ENCODE measurements at regions of chr10 and their contacts with region 1.

Region 1: GRCh38 chr10:48363617-48364355 is 57.3 kb downstream of the MAPK8 start:
- DNase-seq: peak; percentile 60
- H3K4me3 ChIP-seq: no peak overlapping the region
- H3K27ac ChIP-seq: peak overlapping the region; percentile 36
- H3K4me1 ChIP-seq: peaks cover 21% of the 10 kb centered on the region
- H3K27me3 ChIP-seq: no peaks in the 10 kb centered on the region
- CTCF ChIP-seq: peak; percentile 64 to 77

Region 2: DNA sequence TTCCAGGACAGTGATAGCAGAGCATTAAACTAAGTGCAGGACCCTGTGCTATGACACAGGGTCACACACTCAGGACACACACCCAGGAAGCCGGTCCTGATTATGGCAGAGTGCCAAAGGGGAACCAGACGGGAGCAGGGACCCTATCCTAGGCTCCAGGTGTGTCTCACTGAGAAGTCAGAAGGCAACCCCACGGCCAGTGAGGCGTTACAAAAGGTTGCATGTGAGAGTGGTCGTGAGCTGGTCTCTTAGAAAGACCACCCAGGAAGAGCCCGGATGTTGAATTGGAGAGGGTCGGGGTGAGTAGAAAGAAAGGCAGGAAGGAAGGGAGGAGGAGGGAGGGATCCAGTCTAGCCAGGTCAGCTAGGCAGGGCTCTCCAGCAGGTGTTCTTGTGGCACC is 120.3 kb before region 1 on chr10:
- CTCF ChIA-PET with region 1: no interaction called
- dilution Hi-C with region 1: no loop called
- in situ Hi-C with region 1: no loop called
- intact Hi-C with region 1: no loop called
- DNase-seq: no peak
- H3K4me3 ChIP-seq: no peak overlapping the region
- H3K27ac ChIP-seq: no peak overlapping the region
- H3K4me1 ChIP-seq: no peaks in the 10 kb centered on the region
- H3K27me3 ChIP-seq: no peaks in the 10 kb centered on the region
- CTCF ChIP-seq: no peak

Region 3: GRCh38 chr10:48414778-48415177 is 51.0 kb after region 1 on chr10:
- CTCF ChIA-PET with region 1: no interaction called
- dilution Hi-C with region 1: no loop called
- in situ Hi-C with region 1: no loop called
- intact Hi-C with region 1: loop called (anchors 2 kb)
- DNase-seq: peak; percentile 77
- H3K4me3 ChIP-seq: no peak overlapping the region
- H3K27ac ChIP-seq: peak overlapping the region; percentile 6
- H3K4me1 ChIP-seq: peaks cover 40% of the 10 kb centered on the region
- H3K27me3 ChIP-seq: no peaks in the 10 kb centered on the region
- CTCF ChIP-seq: no peak

Region 4: GRCh38 chr10:48444266-48444665 is 80.5 kb after region 1 on chr10:
- CTCF ChIA-PET with region 1: interaction called, 5 read pairs
- dilution Hi-C with region 1: no loop called
- in situ Hi-C with region 1: no loop called
- intact Hi-C with region 1: loop called (anchors 1 kb)
- DNase-seq: peak; percentile 33
- H3K4me3 ChIP-seq: no peak overlapping the region
- H3K27ac ChIP-seq: no peak overlapping the region
- H3K4me1 ChIP-seq: peaks cover under 1% of the 10 kb centered on the region
- H3K27me3 ChIP-seq: no peaks in the 10 kb centered on the region
- CTCF ChIP-seq: peak in 1 of 2 donors; percentile 64

Region 5: GRCh38 chr10:48506147-48506917 is 142.5 kb after region 1 on chr10:
- CTCF ChIA-PET with region 1: no interaction called
- dilution Hi-C with region 1: no loop called
- in situ Hi-C with region 1: loop called in 1 of 2 experiments (anchors 10 kb)
- intact Hi-C with region 1: loop called (anchors 1 kb)
- DNase-seq: no peak
- H3K4me3 ChIP-seq: no peak overlapping the region
- H3K27ac ChIP-seq: no peak overlapping the region
- H3K4me1 ChIP-seq: peaks cover 10% of the 10 kb centered on the region
- H3K27me3 ChIP-seq: no peaks in the 10 kb centered on the region
- CTCF ChIP-seq: peak in 1 of 2 donors; percentile 42

Region 6: GRCh38 chr10:48608279-48608681 is 244.5 kb after region 1 on chr10:
- CTCF ChIA-PET with region 1: no interaction called
- dilution Hi-C with region 1: no loop called
- in situ Hi-C with region 1: no loop called
- intact Hi-C with region 1: loop called (anchors 5 kb)
- DNase-seq: peak; percentile 48
- H3K4me3 ChIP-seq: no peak overlapping the region
- H3K27ac ChIP-seq: no peak overlapping the region
- H3K4me1 ChIP-seq: peaks cover 59% of the 10 kb centered on the region
- H3K27me3 ChIP-seq: no peaks in the 10 kb centered on the region
- CTCF ChIP-seq: peak; percentile 90 to 94

Region 7: DNA sequence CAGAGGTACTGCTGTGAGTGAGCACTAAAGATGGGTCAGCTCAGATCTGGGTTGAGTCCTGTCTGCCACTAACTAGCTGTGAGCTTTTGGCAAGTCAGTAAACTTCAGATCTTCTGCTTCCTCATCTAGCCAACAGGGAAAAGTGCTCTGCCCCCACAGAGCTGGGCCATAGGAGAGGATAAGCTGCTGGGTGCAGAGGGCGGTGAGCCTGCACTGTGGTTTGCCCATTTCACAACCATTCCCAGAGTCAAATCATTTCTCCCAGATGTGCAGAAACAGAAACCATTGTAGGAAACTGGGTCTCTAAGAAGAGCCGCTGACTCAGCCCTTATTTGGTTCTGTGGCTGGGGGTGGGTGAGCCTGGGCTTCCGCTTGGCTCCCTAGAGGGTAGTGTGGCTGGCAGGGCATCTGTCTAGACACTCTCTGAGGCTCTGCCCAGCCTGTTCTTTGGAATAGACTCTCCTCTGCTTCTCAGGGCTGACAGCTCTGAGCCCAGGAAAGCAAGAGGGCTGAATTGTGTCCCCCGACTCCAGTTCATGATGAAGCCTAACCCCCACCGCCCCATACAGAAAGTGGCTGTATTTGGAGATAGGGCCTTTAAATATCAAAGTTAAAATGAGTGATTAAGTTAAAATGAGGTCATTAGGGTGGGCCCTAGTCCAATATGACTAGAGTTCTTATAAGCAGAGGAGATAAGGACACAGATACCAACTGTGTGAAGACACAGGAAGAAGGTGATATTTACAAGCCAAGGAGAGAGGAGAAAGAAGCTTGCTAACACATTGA is 270.6 kb after region 1 on chr10:
- CTCF ChIA-PET with region 1: no interaction called
- dilution Hi-C with region 1: no loop called
- in situ Hi-C with region 1: loop called in 1 of 2 experiments (anchors 25 kb)
- intact Hi-C with region 1: no loop called
- DNase-seq: peak; percentile 21
- H3K4me3 ChIP-seq: no peak overlapping the region
- H3K27ac ChIP-seq: no peak overlapping the region
- H3K4me1 ChIP-seq: no peaks in the 10 kb centered on the region
- H3K27me3 ChIP-seq: no peaks in the 10 kb centered on the region
- CTCF ChIP-seq: no peak

Measured in mammary epithelial cell (primary cell).